ENCODE measurements at regions of chr5 and their contacts with region 1.

Region 1: GRCh38 chr5:611721-612486 is at the start of gene CEP72:
- DNase-seq: peak; percentile 18
- ATAC-seq: peak; percentile 94
- H3K4me3 ChIP-seq: peak within 1 kb of the TSS; percentile 71 to 80
- H3K27ac ChIP-seq: peak within 1 kb of the TSS; percentile 86
- H3K4me1 ChIP-seq: 0 out of 2 replicates have a peak, but pooled peaks cover 2% of the 10 kb centered on the region
- H3K27me3 ChIP-seq: no peaks in the 10 kb centered on the region
- CTCF ChIP-seq: no peak
- total RNA-seq, gene CEP72: 33.2 TPM

Region 2: GRCh38 chr5:472656-473553 is 139.0 kb before region 1 on chr5:
- CTCF ChIA-PET with region 1: no interaction called
- POLR2A ChIA-PET with region 1: no interaction called
- in situ Hi-C with region 1: no loop called
- intact Hi-C with region 1: loop called (anchors 10 kb)
- DNase-seq: no peak
- ATAC-seq: peak; percentile 78
- H3K4me3 ChIP-seq: peak overlapping the region; percentile 75 to 85
- H3K27ac ChIP-seq: peak overlapping the region; percentile 83
- H3K4me1 ChIP-seq: peaks cover 16% of the 10 kb centered on the region
- H3K27me3 ChIP-seq: no peaks in the 10 kb centered on the region
- CTCF ChIP-seq: no peak